Left colon (tissue), 2 donors: ENCODE measurements at regions of chr7 and their contacts with region 1.

Region 1: GRCh38 chr7:40604601-40605438 is 470.0 kb downstream of the SUGCT start:
- DNase-seq: peak; percentile 24 to 42
- ATAC-seq: peak; percentile 80

Region 2: GRCh38 chr7:40329601-40330153 is 275.1 kb before region 1 on chr7:
- intact Hi-C with region 1: loop called in 1 of 2 experiments (anchors 10 kb)
- DNase-seq: no peak
- ATAC-seq: peak; percentile 77

Region 3: DNA sequence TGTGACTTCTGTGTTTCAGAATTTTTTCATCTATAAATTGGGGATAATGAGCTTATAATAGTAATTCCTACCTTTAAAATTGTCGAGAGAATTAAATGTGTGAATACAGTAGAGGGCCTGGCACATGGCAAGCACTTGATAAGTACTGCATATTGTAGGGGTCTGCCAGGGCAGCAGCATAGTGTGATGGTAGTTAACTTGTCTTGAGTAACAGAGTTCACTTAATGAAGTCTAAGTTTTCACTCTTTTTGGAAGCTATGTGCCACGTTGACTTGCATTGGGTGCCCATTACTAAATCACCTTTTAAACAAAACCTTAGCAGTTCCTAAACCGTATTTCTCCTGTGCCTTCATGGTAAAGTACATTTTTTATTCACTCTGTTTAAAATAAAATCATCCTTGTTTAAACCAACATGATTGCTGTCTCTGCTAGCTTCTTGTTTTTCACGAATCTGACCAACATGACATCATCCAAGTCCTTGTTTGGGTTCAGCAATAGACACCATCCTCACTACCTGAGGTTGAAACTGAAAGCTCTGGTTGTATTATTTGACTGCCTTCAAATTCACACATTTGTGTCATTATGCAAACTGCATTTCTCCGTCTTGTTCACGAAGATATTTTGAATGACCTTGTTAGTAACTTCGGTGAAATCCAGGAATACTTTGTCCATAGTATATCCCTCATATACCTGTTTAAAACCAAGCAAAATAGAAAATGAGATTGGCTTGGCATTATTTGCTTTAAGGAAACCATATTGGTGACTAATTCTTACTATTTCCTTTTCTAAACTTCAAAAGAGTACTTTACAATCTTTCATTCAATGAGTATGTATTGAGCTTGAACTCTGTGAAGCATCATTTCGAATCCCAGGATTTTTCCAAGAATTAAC is 129.8 kb before region 1 on chr7:
- intact Hi-C with region 1: no loop called
- DNase-seq: no peak
- ATAC-seq: no peak

Region 4: DNA sequence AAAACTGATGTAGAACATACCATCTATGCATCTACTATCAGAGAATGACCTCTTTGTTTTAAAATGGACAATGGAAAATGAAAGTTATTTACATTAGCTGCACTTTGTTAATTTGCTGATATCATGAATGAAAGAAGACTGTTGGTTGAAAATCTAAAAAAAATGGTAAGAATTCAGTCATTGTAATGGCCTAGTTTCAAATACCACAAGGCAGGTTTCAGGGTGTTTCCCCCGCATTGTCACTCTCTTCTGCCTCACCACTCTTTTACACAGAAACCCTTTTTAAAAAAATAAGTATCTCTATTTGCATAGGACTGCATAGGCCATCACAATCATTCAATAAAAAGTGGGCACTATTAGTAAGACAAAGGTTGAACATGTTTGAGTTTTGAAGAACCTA is 360.9 kb after region 1 on chr7:
- intact Hi-C with region 1: no loop called
- DNase-seq: no peak
- ATAC-seq: no peak